IMR-90 (cell line): ENCODE measurements at regions of chr5 and their contacts with region 1.

Region 1: DNA sequence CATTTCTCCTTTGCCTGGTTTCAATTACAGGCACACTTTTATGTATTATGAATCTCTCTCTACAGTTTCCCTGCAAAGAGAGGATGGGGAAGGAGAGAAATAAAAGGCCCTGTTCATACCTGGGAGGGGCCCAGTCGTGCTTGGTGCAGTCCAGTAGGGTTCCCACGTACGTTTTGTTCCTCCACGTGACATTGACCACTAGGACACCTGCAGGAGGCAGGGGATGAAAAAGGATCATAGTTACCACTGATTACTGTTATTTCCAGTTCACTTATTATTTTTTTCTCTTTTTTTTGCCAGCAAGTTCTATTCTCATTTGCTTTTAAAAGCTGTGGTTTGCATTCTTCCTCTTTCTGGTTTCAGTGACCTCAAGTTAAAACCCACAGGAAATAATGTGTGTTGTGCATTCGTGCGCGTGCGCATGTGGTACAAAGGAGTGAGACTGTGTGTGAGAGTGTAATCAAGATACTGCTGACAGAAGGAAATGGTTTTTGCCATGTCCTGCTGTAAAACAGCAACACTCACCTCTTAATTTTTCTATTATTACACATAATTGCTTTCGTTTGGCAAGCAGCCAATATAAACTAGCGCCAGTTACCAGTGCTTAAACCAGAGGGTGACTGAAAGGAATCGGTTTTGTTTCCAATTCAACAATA is 96.8 kb downstream of the ZNF608 start:
- DNase-seq: peak; percentile 93
- ATAC-seq: peak; percentile 23; the same call in 1 of the 2 replicates
- H3K4me3 ChIP-seq: no peak overlapping the region
- H3K27ac ChIP-seq: peak overlapping the region; percentile 85
- H3K4me1 ChIP-seq: peaks cover 23% of the 10 kb centered on the region
- H3K27me3 ChIP-seq: no peaks in the 10 kb centered on the region
- CTCF ChIP-seq: no peak
- POLR2A ChIP-seq: no peak
- RAD21 ChIP-seq: 0 out of 2 replicates have a peak, but pooled peaks have one; percentile 8

Region 2: DNA sequence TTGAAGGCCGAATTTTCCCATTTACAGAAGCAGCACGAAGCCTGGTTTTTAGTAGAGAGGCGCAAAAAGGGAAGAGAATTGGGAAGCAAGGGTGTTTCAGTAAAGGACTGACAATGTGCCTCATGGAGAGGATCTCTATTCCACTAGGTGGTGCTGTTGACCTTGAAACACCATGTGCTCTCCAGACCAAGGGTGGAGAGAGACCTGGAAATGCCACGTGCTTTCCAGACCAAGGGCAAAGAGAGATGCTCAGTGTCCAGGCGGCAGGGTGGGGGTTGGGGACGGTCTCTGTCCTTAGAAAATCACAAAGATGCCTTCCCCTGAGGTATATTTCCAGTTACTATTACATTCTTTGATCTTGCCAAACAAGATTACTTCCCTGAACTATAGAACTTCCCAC is 712.4 kb before region 1 on chr5:
- CTCF ChIA-PET with region 1: no interaction called
- POLR2A ChIA-PET with region 1: no interaction called
- dilution Hi-C with region 1: no loop called
- in situ Hi-C with region 1: no loop called
- intact Hi-C with region 1: loop called (anchors 10 kb)
- DNase-seq: peak; percentile 67
- ATAC-seq: no peak
- H3K4me3 ChIP-seq: no peak overlapping the region
- H3K27ac ChIP-seq: no peak overlapping the region
- H3K4me1 ChIP-seq: no peaks in the 10 kb centered on the region
- H3K27me3 ChIP-seq: no peaks in the 10 kb centered on the region
- CTCF ChIP-seq: peak; percentile 62
- POLR2A ChIP-seq: no peak
- RAD21 ChIP-seq: peak; percentile 81

Region 3: DNA sequence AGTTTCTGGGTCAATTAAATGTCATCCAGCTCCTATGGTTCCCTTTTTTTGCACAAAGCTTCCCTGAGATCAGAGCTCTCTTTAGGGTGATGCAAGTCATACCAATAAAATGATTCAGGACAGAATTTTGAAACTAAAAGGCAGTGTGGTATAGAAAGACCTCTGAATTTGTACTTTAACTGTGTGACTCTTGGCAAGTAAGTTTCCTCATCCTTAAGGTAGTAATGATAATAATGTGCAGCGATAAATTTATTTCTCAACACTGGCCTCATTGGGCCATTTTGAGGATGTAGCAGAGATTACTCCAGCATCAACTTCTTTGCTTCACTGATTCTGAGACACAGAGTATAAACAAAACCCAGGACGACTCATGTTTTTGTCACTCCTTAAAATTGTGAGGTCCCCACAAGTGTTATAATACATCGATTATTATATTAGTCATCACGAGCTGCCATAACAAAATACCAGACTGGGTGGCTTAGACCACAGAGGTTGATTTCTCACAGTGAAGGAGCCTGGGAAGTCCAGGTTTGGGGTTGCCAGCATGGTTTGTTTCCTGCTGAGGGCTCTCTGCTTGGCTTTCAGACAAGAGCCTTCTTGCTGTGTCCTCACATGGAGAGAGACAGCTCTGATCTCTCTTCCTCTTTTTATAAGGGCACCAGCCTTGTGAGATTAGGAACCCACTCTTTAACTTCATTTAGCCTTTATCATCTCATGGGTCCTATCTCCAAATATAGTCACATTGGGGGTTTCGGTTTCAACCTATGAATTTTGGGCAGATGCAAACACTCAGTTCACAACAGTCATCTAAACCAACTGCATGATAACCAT is 196.2 kb before region 1 on chr5:
- CTCF ChIA-PET with region 1: no interaction called
- POLR2A ChIA-PET with region 1: no interaction called
- dilution Hi-C with region 1: no loop called
- in situ Hi-C with region 1: no loop called
- intact Hi-C with region 1: loop called (anchors 5 kb)
- DNase-seq: peak; percentile 89
- ATAC-seq: peak; percentile 60
- H3K4me3 ChIP-seq: no peak overlapping the region
- H3K27ac ChIP-seq: 0 out of 2 replicates have a peak overlapping the region, but pooled peaks have one; percentile 34
- H3K4me1 ChIP-seq: peaks cover 16% of the 10 kb centered on the region
- H3K27me3 ChIP-seq: peaks cover 5% of the 10 kb centered on the region
- CTCF ChIP-seq: no peak
- POLR2A ChIP-seq: no peak
- RAD21 ChIP-seq: no peak

Region 4: DNA sequence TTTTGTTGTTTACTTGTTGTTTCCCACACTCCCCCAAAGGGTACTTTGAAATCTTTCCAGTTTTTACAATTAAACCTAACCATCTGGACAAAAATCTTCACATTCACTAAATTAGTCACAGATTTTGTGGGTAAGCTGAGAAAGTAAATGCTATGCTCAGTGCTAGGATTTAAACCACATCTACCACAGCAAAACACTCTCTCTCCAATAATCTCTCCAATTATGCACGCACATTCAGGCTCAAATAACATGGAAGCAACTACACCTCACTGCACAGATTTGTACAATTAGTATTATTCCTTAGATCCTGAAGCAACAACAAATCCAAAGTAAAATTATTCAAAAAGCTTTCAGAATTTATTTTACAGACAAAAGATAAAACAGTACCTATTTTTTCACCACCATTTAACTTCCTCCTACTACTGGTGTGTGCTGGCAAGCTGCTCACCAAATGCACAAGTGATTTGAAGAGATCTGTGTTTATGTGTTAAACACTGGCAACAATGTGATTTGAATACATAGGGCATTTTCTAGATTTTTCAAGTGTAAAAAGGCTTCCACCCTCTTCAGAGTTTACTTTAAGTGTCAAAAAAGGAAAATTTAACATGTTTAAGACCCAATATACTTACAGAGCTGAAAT is 80.2 kb after region 1 on chr5:
- CTCF ChIA-PET with region 1: no interaction called
- POLR2A ChIA-PET with region 1: no interaction called
- dilution Hi-C with region 1: no loop called
- in situ Hi-C with region 1: loop called (anchors 5 kb)
- intact Hi-C with region 1: no loop called
- DNase-seq: no peak
- ATAC-seq: no peak; the same call in 1 of the 2 replicates
- H3K4me3 ChIP-seq: no peak overlapping the region
- H3K27ac ChIP-seq: no peak overlapping the region
- H3K4me1 ChIP-seq: peaks cover 8% of the 10 kb centered on the region; the same call in 1 of the 2 replicates
- H3K27me3 ChIP-seq: no peaks in the 10 kb centered on the region; the same call in 1 of the 2 replicates
- CTCF ChIP-seq: no peak
- POLR2A ChIP-seq: no peak
- RAD21 ChIP-seq: no peak